MCF 10A (cell line): ENCODE measurements at regions of chr12 and their contacts with region 1.

Region 1: GRCh38 chr12:120301962-120302815 is at the start of gene SIRT4:
- DNase-seq: peak; percentile 96
- H3K4me3 Mint-ChIP-seq: peak within 1 kb of the TSS; percentile 97
- H3K27ac Mint-ChIP-seq: peak within 1 kb of the TSS; percentile 88
- H3K4me1 Mint-ChIP-seq: peaks cover 5% of the 10 kb centered on the region
- H3K27me3 Mint-ChIP-seq: no peaks in the 10 kb centered on the region
- CTCF ChIP-seq: peak; percentile 64
- total RNA-seq, gene SIRT4: 0.61 TPM in 1 of 2 replicates, not detected in the other

Region 2: DNA sequence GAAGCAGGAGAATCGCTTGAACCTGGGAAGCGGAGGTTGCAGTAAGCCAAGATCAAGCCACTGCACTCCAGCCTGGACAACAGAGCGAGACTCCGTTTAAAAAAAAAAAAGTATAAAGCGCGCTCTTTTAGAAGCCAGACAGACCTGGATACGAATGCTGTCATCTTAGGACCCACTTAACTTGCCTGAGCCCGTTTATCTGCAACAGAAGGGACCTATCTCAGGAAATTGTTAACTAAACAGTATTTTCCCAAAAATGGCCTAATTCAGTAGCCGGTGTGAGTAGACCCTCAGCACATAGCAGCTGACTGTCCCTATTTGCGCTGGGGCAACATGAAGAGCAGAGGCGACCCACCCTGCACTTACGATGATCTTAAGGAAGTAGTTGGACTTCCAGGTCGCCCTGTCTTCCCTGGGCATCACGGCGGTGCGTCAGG is 101.8 kb before region 1 on chr12:
- CTCF ChIA-PET with region 1: interaction called, 3 read pairs
- POLR2A ChIA-PET with region 1: interaction called, 12 read pairs
- intact Hi-C with region 1: no loop called
- DNase-seq: no peak
- H3K4me3 Mint-ChIP-seq: peak overlapping the region; percentile 84
- H3K27ac Mint-ChIP-seq: peak overlapping the region; percentile 98
- H3K4me1 Mint-ChIP-seq: peaks cover 23% of the 10 kb centered on the region
- H3K27me3 Mint-ChIP-seq: no peaks in the 10 kb centered on the region
- CTCF ChIP-seq: no peak

Region 3: DNA sequence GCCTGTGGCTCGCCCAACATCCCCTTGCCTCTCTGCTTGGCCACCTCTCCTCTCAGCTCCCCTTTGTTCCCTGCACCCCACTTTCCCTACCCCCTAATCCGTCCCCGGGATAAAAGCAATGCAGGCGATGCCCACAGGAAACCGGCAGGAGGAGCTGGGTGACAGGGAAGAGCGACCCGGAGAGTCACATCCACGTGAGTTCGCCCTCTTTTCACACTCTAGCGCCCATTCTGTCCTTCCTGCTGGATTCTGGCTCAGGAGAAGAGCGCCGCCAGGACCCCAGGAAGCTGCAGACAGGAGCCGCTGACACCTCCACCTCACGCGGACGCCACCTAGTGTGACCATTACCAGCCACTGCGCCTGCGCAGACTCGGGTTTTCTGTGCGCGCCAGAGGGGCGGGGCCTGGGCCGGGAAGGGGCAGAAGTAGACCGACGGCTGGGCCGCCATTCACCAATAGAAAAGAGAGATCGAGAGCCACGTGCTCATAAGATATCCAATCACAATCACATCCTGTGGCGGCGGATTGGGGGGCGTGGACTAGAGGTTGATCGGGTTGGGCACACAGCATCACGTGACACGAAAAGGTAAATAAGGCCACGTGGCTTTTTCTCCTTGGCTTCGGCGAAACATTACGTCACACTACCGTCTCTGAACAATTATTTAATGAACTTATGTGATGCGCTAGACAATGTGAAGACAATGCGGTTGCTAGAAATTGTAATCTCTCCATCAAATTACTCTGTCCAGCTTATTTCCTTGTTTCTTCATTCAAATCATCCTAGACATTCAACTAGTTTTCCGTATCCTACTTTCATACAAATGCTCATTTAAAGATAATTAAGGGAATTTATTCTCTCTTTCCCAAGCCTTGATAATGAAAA is 15.3 kb after region 1 on chr12:
- CTCF ChIA-PET with region 1: interaction called, 64 read pairs
- POLR2A ChIA-PET with region 1: interaction called, 44 read pairs
- intact Hi-C with region 1: no loop called
- DNase-seq: peak; percentile 100
- H3K4me3 Mint-ChIP-seq: peak overlapping the region; percentile 95
- H3K27ac Mint-ChIP-seq: peak overlapping the region; percentile 97
- H3K4me1 Mint-ChIP-seq: peaks cover 15% of the 10 kb centered on the region
- H3K27me3 Mint-ChIP-seq: no peaks in the 10 kb centered on the region
- CTCF ChIP-seq: peak; percentile 54